Sigmoid colon (tissue), 7 donors: ENCODE measurements at regions of chr20 and their contacts with region 1.

Region 1: GRCh38 chr20:13813910-13814309 is 29.1 kb downstream of the NDUFAF5 start:
- DNase-seq: no peak
- H3K4me3 ChIP-seq: no peak overlapping the region
- H3K27ac ChIP-seq: no peak overlapping the region
- H3K4me1 ChIP-seq: no peaks in the 10 kb centered on the region
- H3K27me3 ChIP-seq: no peaks in the 10 kb centered on the region
- CTCF ChIP-seq: no peak
- EP300 ChIP-seq: no peak
- POLR2A ChIP-seq: no peak

Region 2: GRCh38 chr20:13800728-13801134 is 13.2 kb before region 1 on chr20:
- intact Hi-C with region 1: loop called (anchors 1 kb)
- DNase-seq: peak; percentile 96
- H3K4me3 ChIP-seq: no peak overlapping the region
- H3K27ac ChIP-seq: peak overlapping the region; percentile 41 to 67 (median 54)
- H3K4me1 ChIP-seq: peaks cover 0 to 24% (median 21%) of the 10 kb centered on the region in 4 donors
- H3K27me3 ChIP-seq: no peaks in the 10 kb centered on the region
- CTCF ChIP-seq: no peak
- EP300 ChIP-seq: no peak
- POLR2A ChIP-seq: no peak